ENCODE measurements at regions of chr5 and their contacts with region 1.

Region 1: GRCh38 chr5:65481635-65482295 is at the start of gene ADAMTS6:
- DNase-seq: peak; percentile 85
- H3K4me3 Mint-ChIP-seq: no peak within 1 kb of the TSS
- H3K27ac Mint-ChIP-seq: peak within 1 kb of the TSS; percentile 38
- H3K4me1 Mint-ChIP-seq: peaks cover 6% of the 10 kb centered on the region
- H3K27me3 Mint-ChIP-seq: no peaks in the 10 kb centered on the region
- total RNA-seq, gene ADAMTS6: 0.86 to 0.93 TPM

Region 2: GRCh38 chr5:64506567-64507263 is 975.0 kb before region 1 on chr5:
- CTCF ChIA-PET with region 1: no interaction called
- intact Hi-C with region 1: no loop called
- DNase-seq: no peak
- H3K4me3 Mint-ChIP-seq: no peak overlapping the region
- H3K27ac Mint-ChIP-seq: no peak overlapping the region
- H3K4me1 Mint-ChIP-seq: peaks cover 5% of the 10 kb centered on the region
- H3K27me3 Mint-ChIP-seq: peaks cover 42% of the 10 kb centered on the region

Region 3: GRCh38 chr5:64768358-64769312 is 713.1 kb before region 1 on chr5 and contains the starts of genes CWC27 and SREK1IP1:
- CTCF ChIA-PET with region 1: no interaction called
- intact Hi-C with region 1: loop called (anchors 1 kb)
- DNase-seq: peak; percentile 90
- H3K4me3 Mint-ChIP-seq: peak within 1 kb of the TSS; percentile 99
- H3K27ac Mint-ChIP-seq: peak within 1 kb of the TSS; percentile 97
- H3K4me1 Mint-ChIP-seq: peaks cover 53% of the 10 kb centered on the region
- H3K27me3 Mint-ChIP-seq: no peaks in the 10 kb centered on the region
- total RNA-seq, gene CWC27: 35.8 to 39.8 TPM
- total RNA-seq, gene SREK1IP1: 16.7 to 17.6 TPM

Region 4: DNA sequence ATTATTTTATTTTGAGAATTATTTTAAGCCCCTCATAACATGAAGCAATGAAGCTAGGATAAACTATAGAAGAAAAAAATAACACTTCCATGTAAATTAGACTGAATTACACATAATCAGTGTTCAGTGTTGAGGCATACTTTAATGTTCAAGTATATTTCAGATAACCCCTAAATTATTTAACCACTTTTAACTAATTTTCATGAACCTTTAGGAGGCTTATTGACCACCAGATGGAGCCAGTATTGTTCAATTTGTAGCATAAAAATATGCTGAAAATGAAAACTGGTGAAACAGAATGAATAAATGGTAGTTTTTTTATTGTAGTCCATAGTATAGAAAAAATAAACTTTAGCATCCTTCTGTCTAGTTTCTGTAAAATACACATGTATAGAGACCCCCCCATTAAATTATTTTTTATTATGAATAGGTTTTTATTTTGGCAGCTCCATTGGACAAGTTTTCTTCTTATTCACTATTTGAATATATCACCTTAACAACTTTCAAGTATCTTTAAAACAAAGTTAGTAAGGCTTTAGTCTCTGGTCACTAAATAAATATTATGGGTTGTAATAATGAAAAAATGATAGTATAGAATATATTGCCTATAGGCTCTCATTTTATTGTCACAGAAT is 522.9 kb before region 1 on chr5:
- CTCF ChIA-PET with region 1: no interaction called
- intact Hi-C with region 1: loop called (anchors 1 kb)
- DNase-seq: no peak
- H3K4me3 Mint-ChIP-seq: no peak overlapping the region
- H3K27ac Mint-ChIP-seq: no peak overlapping the region
- H3K4me1 Mint-ChIP-seq: no peaks in the 10 kb centered on the region
- H3K27me3 Mint-ChIP-seq: no peaks in the 10 kb centered on the region

Region 5: DNA sequence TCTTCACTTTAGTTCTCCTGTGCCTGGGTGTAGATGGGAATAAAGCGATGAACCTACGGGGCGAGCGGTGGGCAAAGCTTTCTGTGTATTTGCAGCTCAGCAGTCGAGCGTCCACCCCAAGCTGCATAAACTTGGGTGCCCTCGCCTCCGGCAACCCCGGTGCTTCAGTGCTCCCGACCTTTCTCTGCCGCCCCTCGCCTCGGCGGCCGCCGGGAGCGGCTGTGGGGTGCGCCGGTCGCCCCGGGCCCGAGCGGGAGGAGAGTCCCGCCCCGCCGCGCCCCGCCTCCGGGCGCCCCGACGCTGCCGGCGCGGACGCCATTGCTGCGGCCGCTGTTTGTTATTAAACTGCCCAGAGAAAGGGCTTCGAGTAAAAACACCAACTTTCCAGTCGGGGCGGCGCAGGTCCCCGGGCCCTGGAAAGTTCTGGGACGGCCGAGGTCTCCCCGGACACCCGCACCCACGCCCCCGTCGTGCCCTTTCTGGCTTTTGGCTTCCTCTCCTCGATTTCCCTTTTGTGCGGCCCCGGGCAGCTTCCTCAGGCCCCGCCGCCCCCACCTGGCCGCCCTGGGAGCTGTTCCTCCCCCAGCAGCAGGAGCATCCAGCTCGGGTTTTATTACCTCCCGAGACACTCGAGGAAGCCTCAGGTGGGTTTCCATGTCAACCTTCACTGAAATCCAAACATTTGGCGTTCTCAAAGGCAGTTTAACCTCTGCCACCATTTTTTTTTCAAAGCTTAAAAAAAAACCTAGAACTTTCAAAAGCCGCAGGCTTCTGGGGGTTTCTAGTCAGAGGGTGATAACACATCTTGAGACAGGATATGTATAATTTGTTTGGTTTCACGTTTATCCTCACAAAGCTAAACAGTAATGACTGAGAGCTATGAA is 378.7 kb before region 1 on chr5:
- CTCF ChIA-PET with region 1: interaction called, 24 read pairs
- intact Hi-C with region 1: loop called (anchors 1 kb)
- DNase-seq: peak; percentile 39
- H3K4me3 Mint-ChIP-seq: peak overlapping the region; percentile 73
- H3K27ac Mint-ChIP-seq: peak overlapping the region; percentile 33
- H3K4me1 Mint-ChIP-seq: peaks cover 41% of the 10 kb centered on the region
- H3K27me3 Mint-ChIP-seq: peaks cover 2% of the 10 kb centered on the region

Region 6: GRCh38 chr5:65394087-65394486 is 87.7 kb before region 1 on chr5:
- CTCF ChIA-PET with region 1: interaction called, 3 read pairs
- intact Hi-C with region 1: loop called (anchors 5 kb)
- DNase-seq: no peak
- H3K4me3 Mint-ChIP-seq: no peak overlapping the region
- H3K27ac Mint-ChIP-seq: no peak overlapping the region
- H3K4me1 Mint-ChIP-seq: no peaks in the 10 kb centered on the region
- H3K27me3 Mint-ChIP-seq: no peaks in the 10 kb centered on the region